ENCODE measurements at regions of chr7 and their contacts with region 1.

Region 1: DNA sequence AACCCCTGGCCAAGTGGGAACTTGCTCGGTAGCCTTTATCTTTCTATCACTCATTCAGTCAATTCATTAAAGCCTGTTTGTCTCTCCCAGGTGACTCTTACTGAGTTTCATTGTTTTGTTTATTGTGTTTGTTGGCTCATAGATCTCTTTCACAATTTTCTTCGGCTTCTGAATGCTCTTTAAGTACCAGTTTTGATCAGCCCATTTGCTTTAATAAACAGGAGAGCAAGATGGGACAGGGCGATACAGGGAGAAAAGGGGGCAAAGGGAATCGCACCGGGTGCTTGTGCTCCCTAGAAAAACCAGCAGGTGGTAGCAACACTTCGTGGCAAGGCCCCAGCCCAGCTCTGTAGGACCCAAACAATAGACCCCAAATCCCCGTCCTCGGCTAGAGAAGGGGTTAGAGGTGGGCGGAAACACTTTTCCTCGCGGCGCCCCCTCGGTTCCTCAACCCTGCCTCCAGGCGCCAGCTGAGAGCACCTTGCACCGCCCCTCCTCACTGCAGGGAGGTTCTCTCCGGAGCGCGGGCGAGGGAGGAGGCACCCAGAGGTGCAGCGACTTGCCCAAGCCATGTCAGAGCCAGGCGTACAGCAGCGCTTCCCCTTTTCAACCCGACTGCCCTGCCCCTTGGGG is 1.0 kb upstream of the EPHB6 start:
- DNase-seq: peak; percentile 66
- H3K4me3 ChIP-seq: peak overlapping the region; percentile 62 to 76
- H3K27ac ChIP-seq: peak overlapping the region; percentile 70 to 79
- H3K4me1 ChIP-seq: no peaks in the 10 kb centered on the region
- H3K27me3 ChIP-seq: no peaks in the 10 kb centered on the region
- CTCF ChIP-seq: peak; percentile 72 to 87 (median 84)
- POLR2A ChIP-seq: no peak

Region 2: DNA sequence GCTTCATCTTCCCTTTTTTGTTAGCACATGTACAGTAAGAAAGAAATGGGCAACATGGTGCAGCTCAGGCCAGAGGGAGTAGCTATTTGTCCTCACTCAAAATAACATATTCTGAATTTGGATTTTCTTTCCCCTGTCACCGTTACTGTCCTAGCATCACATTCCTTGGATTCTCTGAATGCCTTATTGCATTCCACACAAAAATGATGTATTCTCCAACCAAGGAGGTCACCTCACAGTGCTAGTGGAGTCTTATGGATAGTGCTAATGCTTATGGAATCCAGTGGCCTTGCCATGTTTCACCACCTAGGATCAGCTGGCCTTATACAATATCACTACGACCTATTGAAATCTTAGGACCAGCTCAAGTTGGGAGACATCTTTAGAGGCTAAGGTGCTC is 603.1 kb before region 1 on chr7:
- intact Hi-C with region 1: no loop called
- DNase-seq: no peak
- H3K4me3 ChIP-seq: no peak overlapping the region
- H3K27ac ChIP-seq: no peak overlapping the region
- H3K4me1 ChIP-seq: no peaks in the 10 kb centered on the region
- H3K27me3 ChIP-seq: no peaks in the 10 kb centered on the region
- CTCF ChIP-seq: no peak
- POLR2A ChIP-seq: no peak

Region 3: DNA sequence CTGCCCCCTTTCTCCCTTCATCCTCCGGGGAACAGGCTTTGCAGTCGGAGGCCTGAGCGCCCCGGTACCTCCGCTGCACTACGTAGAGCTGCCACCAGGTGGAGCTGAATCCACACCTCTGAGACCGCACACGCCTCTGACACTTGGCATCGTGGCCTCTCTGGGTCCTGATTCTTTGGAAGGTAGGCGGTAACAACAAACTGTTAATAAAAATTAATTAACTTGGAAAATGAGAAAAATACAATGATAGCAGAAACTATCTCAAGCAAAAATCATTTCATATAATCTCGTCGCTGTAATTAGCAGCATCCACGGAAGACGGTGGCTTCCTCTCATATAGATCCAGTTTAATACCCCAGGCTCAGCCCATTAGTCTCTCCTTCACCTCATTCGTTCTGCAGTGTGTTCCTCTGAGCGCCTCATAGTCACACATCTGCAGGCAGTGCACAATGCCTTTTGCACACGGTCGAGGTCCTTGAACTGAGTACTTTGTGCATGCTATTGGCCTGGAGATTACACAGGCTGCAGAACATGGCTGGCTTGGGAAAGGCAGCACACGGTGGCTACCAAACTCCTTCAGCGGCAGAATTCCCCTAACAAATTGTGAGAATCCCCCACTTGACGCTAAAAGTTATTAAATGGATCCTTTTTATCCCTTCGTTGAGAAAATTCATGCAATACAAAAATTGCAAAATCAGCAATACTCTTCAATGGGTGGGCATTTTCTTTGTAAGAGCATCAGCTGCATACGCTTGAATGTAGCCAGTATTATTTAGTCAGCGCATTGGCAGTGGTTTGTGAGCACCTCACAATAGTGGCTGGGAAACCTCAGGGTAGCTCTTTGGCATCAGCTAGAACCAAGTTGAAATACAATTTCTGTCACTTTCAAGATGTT is 154.4 kb after region 1 on chr7:
- intact Hi-C with region 1: loop called (anchors 2 kb)
- DNase-seq: peak; percentile 74
- H3K4me3 ChIP-seq: no peak overlapping the region
- H3K27ac ChIP-seq: no peak overlapping the region
- H3K4me1 ChIP-seq: no peaks in the 10 kb centered on the region
- H3K27me3 ChIP-seq: no peaks in the 10 kb centered on the region
- CTCF ChIP-seq: peak; percentile 93 to 98 (median 97)
- POLR2A ChIP-seq: no peak

Region 4: GRCh38 chr7:143214789-143215679 is 361.2 kb after region 1 on chr7:
- intact Hi-C with region 1: loop called (anchors 2 kb)
- DNase-seq: peak; percentile 49
- H3K4me3 ChIP-seq: no peak overlapping the region
- H3K27ac ChIP-seq: no peak overlapping the region
- H3K4me1 ChIP-seq: no peaks in the 10 kb centered on the region
- H3K27me3 ChIP-seq: no peaks in the 10 kb centered on the region
- CTCF ChIP-seq: peak; percentile 93 to 99 (median 99)
- POLR2A ChIP-seq: no peak

Region 5: GRCh38 chr7:143391462-143392404 is 537.9 kb after region 1 on chr7:
- intact Hi-C with region 1: loop called (anchors 10 kb)
- DNase-seq: no peak
- H3K4me3 ChIP-seq: no peak overlapping the region
- H3K27ac ChIP-seq: peak overlapping the region; percentile 61 to 65
- H3K4me1 ChIP-seq: no peaks in the 10 kb centered on the region
- H3K27me3 ChIP-seq: no peaks in the 10 kb centered on the region
- CTCF ChIP-seq: no peak
- POLR2A ChIP-seq: no peak

Measured in prostate gland (tissue), 2 donors.